ENCODE measurements at regions of chr12 and their contacts with region 1.

Region 1: DNA sequence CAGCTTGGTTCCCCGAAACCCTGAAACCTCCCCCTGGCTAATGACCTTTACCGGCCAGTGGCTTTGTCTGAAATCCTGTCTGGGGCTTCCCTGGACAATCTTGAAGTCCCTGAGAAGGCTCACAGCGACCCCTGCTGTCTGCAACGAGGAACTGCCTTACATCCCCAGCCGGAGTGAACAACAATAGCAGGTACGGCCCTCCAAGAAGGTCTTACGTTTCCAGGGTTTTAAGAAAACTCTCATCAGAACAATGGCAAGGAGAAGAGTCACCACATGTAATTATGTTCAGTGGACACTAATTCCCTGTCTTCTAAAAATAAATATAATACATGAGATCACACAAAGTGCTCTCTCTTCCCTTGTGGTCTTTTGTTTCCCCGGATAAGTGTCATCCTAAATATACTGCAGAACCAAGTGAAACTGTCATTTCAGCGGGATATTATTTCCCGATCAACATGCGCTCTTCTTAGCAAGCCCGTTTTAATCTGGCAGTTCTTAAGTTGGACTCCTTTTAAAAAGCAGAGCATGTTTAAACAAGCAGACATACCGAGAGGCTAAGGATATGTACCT is 53.3 kb downstream of the RBM19 start:
- DNase-seq: peak; percentile 43
- ATAC-seq: peak; percentile 90
- H3K4me3 ChIP-seq: no peak overlapping the region
- H3K27ac ChIP-seq: no peak overlapping the region
- H3K4me1 ChIP-seq: no peaks in the 10 kb centered on the region
- H3K27me3 ChIP-seq: no peaks in the 10 kb centered on the region
- CTCF ChIP-seq: peak; percentile 96

Region 2: GRCh38 chr12:113439606-113440030 is 473.2 kb before region 1 on chr12:
- CTCF ChIA-PET with region 1: no interaction called
- POLR2A ChIA-PET with region 1: no interaction called
- in situ Hi-C with region 1: no loop called
- intact Hi-C with region 1: loop called (anchors 5 kb)
- DNase-seq: no peak
- ATAC-seq: peak; percentile 82
- H3K4me3 ChIP-seq: no peak overlapping the region
- H3K27ac ChIP-seq: no peak overlapping the region
- H3K4me1 ChIP-seq: no peaks in the 10 kb centered on the region
- H3K27me3 ChIP-seq: peaks cover 5% of the 10 kb centered on the region; the same call in 1 of the 2 replicates
- CTCF ChIP-seq: peak; percentile 87

Region 3: DNA sequence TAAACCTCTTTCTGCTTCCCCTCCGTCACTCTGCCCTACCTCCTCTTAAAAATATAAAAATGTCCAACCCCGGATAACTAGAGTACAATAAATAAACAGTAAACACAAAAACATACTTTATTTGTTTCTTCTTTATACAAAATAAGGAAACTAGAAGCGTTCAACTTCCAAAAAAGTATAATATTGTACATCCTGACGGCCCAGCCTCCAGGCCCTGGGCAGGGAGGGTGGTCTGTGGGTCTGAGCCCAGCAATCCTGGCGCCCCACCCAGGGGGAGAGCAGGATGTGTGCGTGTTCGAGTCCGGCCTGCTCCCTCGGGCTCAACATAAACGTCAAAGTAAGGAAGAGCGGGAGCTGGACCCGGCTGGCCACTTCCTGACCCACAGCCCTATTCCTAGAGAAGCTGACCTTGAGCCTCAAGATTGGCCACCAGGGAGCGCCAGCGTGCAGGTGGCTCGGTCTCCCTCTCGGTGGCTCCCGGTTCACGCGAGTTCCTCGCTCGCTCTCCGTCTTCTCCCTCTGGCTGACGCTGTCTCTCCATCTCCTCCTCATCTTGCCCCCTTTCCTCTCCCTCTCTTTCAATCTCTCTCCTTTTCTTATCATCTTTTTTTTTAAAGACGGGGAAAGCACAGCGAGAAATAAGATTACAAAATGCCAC is 450.6 kb before region 1 on chr12:
- CTCF ChIA-PET with region 1: no interaction called
- POLR2A ChIA-PET with region 1: no interaction called
- in situ Hi-C with region 1: no loop called
- intact Hi-C with region 1: loop called (anchors 2 kb)
- DNase-seq: peak; percentile 38
- ATAC-seq: peak; percentile 87
- H3K4me3 ChIP-seq: peak overlapping the region; percentile 21 to 51
- H3K27ac ChIP-seq: no peak overlapping the region
- H3K4me1 ChIP-seq: peaks cover 8% of the 10 kb centered on the region
- H3K27me3 ChIP-seq: peaks cover 32% of the 10 kb centered on the region
- CTCF ChIP-seq: peak; percentile 90

Region 4: DNA sequence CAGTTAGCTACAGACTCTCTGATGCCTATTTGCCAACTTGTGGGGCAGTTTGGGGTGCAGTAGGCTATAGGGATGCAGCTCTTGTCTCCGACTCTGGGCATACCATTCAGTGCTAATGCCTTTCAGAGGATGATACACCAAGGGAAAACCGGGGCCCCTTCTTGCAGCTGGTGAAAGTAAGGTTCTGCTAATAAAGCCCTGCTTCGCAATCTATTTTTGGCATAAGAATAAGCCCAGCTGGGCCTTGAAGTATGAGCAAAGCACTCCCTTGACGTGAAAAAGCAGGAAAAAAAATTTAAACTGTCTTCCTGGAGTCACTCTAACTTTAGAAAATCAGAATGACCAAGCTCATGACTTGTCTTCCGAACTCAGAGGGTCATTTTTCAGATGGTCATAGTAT is 177.4 kb after region 1 on chr12:
- CTCF ChIA-PET with region 1: no interaction called
- POLR2A ChIA-PET with region 1: no interaction called
- in situ Hi-C with region 1: no loop called
- intact Hi-C with region 1: no loop called
- DNase-seq: no peak
- ATAC-seq: no peak
- H3K4me3 ChIP-seq: no peak overlapping the region
- H3K27ac ChIP-seq: no peak overlapping the region
- H3K4me1 ChIP-seq: no peaks in the 10 kb centered on the region
- H3K27me3 ChIP-seq: no peaks in the 10 kb centered on the region
- CTCF ChIP-seq: no peak